ENCODE measurements at regions of chr5 and their contacts with region 1.

Region 1: GRCh38 chr5:176817841-176818377 is 7.5 kb downstream of the UNC5A start:
- DNase-seq: no peak
- H3K4me3 Mint-ChIP-seq: peak overlapping the region; percentile 50
- H3K27ac Mint-ChIP-seq: no peak overlapping the region
- H3K4me1 Mint-ChIP-seq: peaks cover 9% of the 10 kb centered on the region
- H3K27me3 Mint-ChIP-seq: peaks cover 59% of the 10 kb centered on the region

Region 2: GRCh38 chr5:176863041-176863764 is 45.3 kb after region 1 on chr5:
- intact Hi-C with region 1: no loop called
- DNase-seq: no peak
- H3K4me3 Mint-ChIP-seq: no peak overlapping the region
- H3K27ac Mint-ChIP-seq: no peak overlapping the region
- H3K4me1 Mint-ChIP-seq: no peaks in the 10 kb centered on the region
- H3K27me3 Mint-ChIP-seq: peaks cover 21% of the 10 kb centered on the region

Region 3: GRCh38 chr5:176959051-176959450 is 141.1 kb after region 1 on chr5:
- intact Hi-C with region 1: loop called (anchors 5 kb)
- DNase-seq: no peak
- H3K4me3 Mint-ChIP-seq: no peak overlapping the region
- H3K27ac Mint-ChIP-seq: no peak overlapping the region
- H3K4me1 Mint-ChIP-seq: peaks cover 4% of the 10 kb centered on the region
- H3K27me3 Mint-ChIP-seq: no peaks in the 10 kb centered on the region